GM13977 (cell line): ENCODE measurements at regions of chr12 and their contacts with region 1.

Region 1: DNA sequence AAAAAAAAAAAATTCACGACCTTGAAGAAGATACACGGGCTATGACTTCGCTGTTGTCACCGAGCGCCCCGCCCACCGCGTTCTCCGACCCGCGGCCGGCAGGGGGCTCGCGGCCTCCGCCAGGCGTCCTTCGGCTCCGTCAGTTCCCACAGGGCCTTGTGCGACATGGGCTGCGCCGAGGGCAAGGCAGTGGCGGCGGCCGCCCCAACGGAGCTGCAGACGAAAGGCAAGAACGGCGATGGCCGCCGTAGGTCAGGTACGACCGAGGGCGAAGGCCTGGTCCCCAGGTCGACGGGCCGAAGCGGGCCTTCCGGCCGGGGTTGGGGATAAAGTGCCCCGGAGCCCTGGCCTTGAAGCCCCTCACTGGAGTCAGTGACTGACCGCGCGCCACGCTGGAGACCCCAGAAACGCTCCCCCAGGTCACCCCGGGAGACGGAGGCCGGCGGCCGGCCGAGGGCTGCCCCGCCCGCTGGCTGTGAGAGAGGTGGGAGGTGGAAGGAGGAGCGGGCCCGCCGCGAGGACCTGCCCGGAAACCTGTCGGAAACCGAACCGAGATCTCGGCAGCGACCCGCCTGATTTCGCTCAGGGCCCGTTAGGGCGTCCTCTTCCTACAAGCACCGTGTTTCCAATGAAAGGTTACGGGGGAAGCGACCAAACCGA is at the start of gene TXNRD1:
- DNase-seq: peak; percentile 92
- CTCF ChIP-seq: peak; percentile 92

Region 2: GRCh38 chr12:104352106-104352713 is 136.4 kb after region 1 on chr12:
- in situ Hi-C with region 1: loop called (anchors 5 kb)
- DNase-seq: no peak
- CTCF ChIP-seq: no peak

Region 3: DNA sequence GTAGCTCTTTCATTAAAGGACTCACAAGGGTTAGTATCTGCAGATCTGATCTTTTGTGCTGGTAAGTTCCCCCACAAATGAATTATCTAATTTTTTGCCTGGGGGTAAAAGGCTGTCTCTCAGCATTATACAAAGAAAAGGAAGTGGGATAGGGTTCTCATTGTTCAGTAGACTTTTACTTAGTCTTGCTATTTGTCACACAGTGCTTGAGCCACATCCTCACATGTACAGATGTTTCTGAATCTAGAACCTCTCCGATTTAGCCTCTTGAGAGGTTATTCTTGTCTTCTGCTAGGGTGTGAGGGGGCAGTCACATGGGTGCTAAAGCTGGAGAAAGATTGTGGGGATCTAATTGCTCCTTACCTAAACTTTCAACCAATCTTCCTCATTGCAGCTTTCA is 649.3 kb after region 1 on chr12:
- in situ Hi-C with region 1: loop called (anchors 25 kb)
- DNase-seq: peak; percentile 23
- CTCF ChIP-seq: no peak